PC-9 (cell line): ENCODE measurements at regions of chr12 and their contacts with region 1.

Region 1: DNA sequence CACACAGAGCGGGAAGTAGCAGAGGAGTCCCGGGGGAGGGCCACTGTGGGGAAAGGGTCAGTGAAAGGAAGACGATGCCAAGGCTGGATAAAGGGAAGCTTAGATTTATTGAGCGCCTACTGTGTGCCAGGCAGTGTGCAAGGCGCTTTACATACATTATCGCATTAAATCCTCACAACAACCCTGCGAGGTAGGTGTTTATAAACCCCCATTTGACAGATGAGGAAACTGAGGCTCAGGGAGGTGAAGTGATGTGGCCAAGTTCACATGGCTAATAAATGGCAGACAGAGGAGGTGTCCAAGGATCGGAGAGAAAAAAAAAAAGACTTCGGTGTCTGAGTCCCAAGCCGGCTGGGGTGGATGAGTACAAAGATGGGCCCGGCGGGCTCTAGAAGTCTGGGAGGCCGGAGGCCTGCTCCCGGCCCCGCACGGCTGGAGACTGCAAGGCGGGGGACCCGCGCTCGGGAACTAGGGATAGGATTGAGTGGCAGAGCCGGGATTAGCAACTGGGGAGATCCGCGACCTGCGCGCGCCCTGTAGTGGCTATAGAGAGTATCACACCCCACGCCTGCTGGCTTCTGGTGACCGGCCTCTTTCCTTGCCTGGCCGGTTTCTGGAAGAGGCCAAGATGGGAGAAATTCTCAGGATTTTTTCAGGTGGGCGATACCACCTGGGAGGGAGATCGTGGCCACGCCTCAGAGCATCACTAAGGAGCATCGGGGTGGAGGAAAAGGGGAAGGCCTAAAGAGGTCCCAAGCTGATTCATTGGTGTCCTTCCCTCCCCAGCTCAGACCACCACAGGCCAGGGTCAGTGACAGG is 3.9 kb downstream of the DDN start:
- DNase-seq: peak; percentile 64 to 86
- H3K4me3 ChIP-seq: peak overlapping the region; percentile 27; the same call in 1 of the 2 replicates
- H3K27ac ChIP-seq: no peak overlapping the region
- H3K4me1 ChIP-seq: peaks cover 22% of the 10 kb centered on the region
- H3K27me3 ChIP-seq: no peaks in the 10 kb centered on the region
- CTCF ChIP-seq: peak; percentile 82

Region 2: GRCh38 chr12:48542300-48542928 is 452.9 kb before region 1 on chr12:
- CTCF ChIA-PET with region 1: no interaction called
- POLR2A ChIA-PET with region 1: no interaction called
- intact Hi-C with region 1: loop called (anchors 5 kb)
- DNase-seq: peak in 1 of 2 experiments; percentile 24
- H3K4me3 ChIP-seq: no peak overlapping the region
- H3K27ac ChIP-seq: no peak overlapping the region
- H3K4me1 ChIP-seq: peaks cover 17% of the 10 kb centered on the region; the same call in 1 of the 2 replicates
- H3K27me3 ChIP-seq: peaks cover 6% of the 10 kb centered on the region; the same call in 1 of the 2 replicates
- CTCF ChIP-seq: peak; percentile 57

Region 3: DNA sequence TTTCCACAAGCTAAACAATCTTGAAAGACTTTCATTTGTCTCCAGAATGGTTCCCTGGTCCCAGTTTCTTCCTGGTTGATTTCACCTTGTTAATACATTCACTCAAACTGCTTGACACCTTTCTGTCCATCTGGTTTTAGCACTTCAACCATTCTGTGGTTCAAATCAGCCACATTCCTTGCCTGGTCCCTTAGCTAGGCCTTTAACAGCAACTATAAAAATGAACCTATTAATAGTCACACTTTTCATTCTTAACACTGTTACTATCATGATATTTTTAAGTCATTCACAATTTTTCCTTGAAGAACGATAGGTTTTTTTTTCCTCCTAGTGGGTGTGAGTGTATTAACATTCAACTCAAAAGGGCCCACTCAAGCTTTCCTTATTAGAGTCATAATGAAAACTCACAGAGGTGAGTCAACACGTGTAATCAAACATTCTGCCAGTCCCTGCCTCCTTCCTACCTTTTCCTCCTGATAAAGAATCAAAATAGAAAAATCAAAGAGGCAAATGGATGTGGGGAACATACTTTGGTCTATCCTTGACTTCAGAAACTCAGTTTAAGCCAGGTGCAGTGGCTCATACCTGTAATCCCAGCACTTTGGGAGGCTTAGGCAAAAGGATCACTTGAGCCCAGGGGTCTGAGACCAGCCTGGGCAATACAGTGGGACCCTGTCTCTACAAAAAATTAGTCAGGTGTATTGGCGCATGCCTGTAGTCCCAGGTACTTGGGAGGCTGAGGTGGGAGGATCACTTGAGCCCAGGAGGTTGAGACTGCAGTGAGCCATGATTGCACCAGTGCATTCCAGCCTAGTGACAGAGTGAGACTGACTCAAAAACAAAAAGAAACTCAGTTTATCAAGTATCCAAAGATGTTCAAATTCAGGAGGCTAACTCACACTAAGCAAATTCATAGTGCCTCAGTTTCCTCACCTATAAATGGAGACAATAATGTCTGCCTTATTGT is 244.2 kb before region 1 on chr12:
- CTCF ChIA-PET with region 1: no interaction called
- POLR2A ChIA-PET with region 1: no interaction called
- intact Hi-C with region 1: loop called (anchors 5 kb)
- DNase-seq: no peak
- H3K4me3 ChIP-seq: no peak overlapping the region
- H3K27ac ChIP-seq: no peak overlapping the region
- H3K4me1 ChIP-seq: 0 out of 2 replicates have a peak, but pooled peaks cover 3% of the 10 kb centered on the region
- H3K27me3 ChIP-seq: no peaks in the 10 kb centered on the region
- CTCF ChIP-seq: no peak

Region 4: GRCh38 chr12:49018261-49019119 is 23.2 kb after region 1 on chr12 and contains the start of gene PRKAG1:
- CTCF ChIA-PET with region 1: interaction called, 10 read pairs
- POLR2A ChIA-PET with region 1: interaction called, 4 read pairs
- intact Hi-C with region 1: loop called (anchors 2 kb)
- DNase-seq: peak; percentile 87 to 93
- H3K4me3 ChIP-seq: peak within 1 kb of the TSS; percentile 65
- H3K27ac ChIP-seq: peak within 1 kb of the TSS; percentile 91
- H3K4me1 ChIP-seq: peaks cover 14% of the 10 kb centered on the region
- H3K27me3 ChIP-seq: no peaks in the 10 kb centered on the region
- CTCF ChIP-seq: no peak; the same call in 1 of the 2 replicates
- total RNA-seq, gene PRKAG1: 48.8 and 53.6 TPM in 2 replicates

Region 5: DNA sequence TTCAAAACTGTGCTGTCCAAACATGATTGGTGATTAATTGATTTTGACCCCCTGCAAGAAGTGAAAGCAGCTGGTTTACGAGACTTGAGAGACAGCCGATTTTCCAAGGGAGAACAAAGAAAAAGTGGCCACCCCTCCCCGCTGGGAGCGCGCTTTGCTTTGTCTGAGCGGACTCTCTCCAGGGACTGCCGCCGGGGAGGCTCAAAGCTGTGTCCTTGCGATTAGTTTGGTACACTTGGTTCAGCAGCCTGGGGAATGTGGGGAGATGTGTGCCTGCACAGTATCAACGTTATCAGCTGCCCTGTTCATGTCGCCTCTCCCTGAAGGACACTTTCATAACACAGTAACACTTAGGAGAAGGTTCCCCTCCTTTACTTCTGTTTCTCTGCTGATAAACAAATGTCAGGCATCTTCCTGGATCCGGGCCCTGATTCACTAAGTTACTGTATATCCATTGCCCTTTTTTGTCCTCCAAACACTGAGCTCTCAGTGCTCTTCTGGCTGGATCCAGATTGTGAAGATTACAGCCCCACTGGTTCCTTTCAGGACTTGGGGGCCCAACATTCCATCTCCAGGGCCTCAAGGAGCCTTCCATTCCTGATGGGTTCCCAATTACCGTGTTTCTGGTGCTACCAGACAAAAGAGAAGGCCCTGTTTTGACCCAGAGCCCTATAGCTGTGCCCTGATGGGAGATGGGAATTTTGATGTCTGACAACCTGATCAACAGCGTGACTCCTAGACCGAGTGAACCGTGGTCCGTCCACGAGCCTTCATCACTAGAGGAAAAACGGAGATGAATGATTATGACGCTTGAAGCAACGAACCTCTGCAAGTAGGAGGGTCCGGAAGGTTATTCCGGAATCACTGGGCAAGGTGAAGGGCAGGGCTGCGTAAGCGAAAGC is 237.9 kb after region 1 on chr12:
- CTCF ChIA-PET with region 1: no interaction called
- POLR2A ChIA-PET with region 1: no interaction called
- intact Hi-C with region 1: loop called (anchors 2 kb)
- DNase-seq: no peak
- H3K4me3 ChIP-seq: no peak overlapping the region
- H3K27ac ChIP-seq: no peak overlapping the region
- H3K4me1 ChIP-seq: 0 out of 2 replicates have a peak, but pooled peaks cover 3% of the 10 kb centered on the region
- H3K27me3 ChIP-seq: no peaks in the 10 kb centered on the region
- CTCF ChIP-seq: no peak